ENCODE measurements at regions of chr17 and their contacts with region 1.

Region 1: DNA sequence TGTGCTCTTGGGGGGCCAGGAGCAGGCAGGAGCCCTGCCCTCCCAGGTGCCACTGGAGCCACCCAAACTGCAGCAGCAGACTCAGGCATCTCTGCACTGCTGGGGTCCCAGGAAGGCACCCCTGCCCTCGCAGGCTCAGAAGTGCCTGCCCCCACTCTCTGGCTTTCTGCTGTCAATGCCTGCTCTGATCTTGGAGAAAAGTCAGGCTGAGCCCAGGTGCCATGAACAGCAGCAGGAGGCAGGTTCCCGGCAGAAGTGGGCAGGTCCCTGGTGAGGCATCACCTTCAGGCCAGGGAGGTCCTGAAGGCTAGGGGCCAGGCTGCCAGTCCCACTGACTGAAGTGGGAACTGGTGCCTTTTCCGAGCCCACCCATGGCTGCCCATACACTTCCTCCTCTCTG is 106.5 kb downstream of the MGAT5B start:
- DNase-seq: no peak
- H3K4me3 ChIP-seq: no peak overlapping the region
- CTCF ChIP-seq: no peak

Region 2: GRCh38 chr17:76884971-76885893 is 89.5 kb before region 1 on chr17:
- in situ Hi-C with region 1: loop called (anchors 5 kb)
- DNase-seq: no peak
- H3K4me3 ChIP-seq: no peak overlapping the region
- CTCF ChIP-seq: no peak

Region 3: DNA sequence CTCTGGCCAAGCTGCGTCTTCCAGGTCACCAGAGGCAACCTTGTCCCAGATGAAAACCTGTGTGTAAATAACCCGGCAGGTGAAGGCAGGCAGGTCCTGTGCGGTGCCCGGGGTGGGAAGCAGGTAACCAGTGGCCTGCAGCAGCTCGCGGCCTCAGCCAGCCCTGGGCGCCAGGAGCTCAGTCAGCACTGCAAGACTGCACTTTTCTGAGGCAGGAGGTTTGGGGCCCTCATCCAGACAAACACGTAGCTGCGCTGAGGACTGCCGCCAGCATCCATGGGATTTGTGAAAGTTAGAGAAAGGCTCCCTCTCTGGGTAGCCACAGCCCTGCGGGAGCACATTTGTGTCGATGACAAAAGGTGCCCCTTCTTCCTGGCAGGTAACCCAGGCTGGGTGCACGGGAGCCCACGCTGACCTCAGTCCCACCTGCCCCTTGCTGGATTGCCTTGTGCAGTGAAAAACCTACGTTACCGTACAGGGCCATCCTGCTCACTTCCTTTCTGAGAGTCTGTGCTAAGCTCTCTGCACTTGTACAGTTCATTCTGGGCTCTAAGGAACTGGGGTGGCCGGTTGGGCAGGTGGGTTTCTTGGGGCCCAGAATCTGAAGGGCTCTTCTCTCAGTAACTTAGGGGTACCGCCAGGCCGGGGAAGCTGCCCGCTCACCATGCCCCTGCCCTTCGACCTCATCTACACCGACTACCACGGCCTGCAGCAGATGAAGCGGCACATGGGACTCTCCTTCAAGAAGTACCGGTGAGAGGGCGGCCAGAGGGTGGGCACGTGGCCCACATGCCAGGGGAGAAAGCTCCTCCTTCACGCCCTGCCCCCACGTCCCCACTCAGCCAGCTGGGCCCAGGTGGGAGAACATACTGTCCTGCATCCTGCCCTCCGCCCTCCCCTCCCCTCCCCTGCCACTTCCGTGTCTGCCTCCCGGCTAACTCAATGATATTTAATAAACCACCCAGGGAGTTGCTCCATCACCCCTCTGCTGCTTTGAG is 50.1 kb before region 1 on chr17:
- in situ Hi-C with region 1: loop called (anchors 5 kb)
- DNase-seq: no peak
- H3K4me3 ChIP-seq: no peak overlapping the region
- CTCF ChIP-seq: no peak

Region 4: GRCh38 chr17:77034677-77035424 is 60.1 kb after region 1 on chr17:
- in situ Hi-C with region 1: loop called (anchors 5 kb)
- DNase-seq: no peak
- H3K4me3 ChIP-seq: no peak overlapping the region
- CTCF ChIP-seq: no peak

Measured in astrocyte of the cerebellum (primary cell).